Activated CD4-positive, alpha-beta T cell treated with anti-CD3 and anti-CD28 coated beads, Interleukin-2, amount 10 ng/mL, durations not matched to agents 24 days and 14 days (primary cell): ENCODE measurements at regions of chr7 and their contacts with region 1.

Region 1: DNA sequence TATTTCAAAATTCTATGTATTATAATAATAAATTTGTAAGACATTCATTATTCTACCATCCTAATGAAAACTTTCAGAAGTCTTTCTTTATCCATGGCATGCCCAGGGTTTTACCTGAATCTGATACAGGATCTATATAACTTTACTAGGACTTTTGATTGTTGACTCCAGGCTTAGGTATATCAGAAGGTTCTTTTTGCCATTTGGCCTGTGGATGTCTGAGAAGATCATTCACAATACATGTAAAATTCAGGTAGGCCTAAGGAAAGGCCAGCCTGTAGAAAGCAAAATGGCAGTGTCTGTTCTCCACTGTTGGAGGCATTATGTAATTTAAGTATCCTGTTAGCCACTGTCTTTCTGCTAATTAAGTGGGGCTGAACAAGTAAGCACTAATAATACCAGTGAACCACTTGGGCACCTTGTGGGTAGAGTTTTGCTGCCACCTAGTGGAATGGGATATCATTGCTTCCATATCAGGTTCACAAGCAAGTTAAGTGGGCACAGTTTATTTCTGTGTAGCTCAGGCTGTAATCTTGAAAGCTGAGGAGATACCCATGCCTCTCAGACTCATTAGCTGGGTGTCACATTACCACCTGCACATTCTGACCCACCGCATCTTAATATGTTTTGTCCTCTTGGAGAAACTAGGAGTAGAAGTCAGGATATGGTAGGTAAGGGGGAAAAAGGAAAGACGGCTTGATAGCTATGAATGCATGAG is 105.5 kb downstream of the SEPTIN7 start:
- DNase-seq: peak; percentile 91
- H3K4me3 Mint-ChIP-seq: no peak overlapping the region
- H3K27ac Mint-ChIP-seq: no peak overlapping the region
- H3K4me1 Mint-ChIP-seq: no peaks in the 10 kb centered on the region
- H3K27me3 Mint-ChIP-seq: no peaks in the 10 kb centered on the region

Region 2: DNA sequence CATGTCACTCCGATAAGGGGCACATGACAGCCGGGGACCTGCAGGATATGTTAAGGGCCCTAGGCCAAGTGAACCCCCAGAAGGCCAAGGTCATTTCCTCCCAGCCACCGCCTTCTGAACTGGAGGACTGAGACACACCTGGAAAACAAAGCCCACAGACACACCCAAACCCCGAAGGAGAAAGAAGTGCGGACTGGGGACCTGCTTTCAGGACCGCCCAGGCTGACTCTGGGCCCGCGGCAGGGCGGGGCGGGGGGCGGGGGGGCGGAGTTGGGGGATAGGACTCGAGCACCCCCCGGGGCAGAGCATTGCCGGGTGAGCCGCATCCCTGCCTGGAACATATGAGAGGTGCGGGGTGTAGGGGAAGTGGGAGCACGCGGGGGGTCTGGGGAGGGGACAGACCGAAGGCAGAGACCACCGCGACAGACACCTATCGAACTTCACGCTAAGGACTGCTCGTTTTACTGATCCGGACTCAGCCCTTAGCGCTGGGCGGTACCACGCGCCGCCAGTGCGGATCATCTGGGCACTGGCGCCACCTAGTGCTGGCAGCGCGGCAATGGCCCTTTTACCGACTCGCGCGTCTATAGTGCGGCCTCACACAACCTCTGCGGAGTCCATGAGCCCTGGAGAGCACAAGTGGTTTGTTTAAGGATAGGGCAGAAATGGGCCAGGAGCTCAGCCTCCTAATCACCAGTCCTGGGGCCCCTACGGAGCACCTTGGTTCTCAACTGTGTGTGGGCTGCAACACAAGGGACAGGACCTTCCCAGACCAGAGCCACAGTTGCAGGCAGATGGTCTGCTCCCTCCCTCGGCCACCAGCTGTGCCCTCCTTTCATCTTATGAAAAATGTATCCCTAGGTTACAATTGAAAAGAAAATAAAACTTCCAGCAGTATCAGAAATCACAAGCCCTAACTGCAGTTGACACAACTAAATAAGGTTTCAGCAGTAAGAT is 369.0 kb before region 1 on chr7:
- intact Hi-C with region 1: loop called (anchors 1 kb)
- DNase-seq: peak; percentile 94
- H3K4me3 Mint-ChIP-seq: peak overlapping the region; percentile 77
- H3K27ac Mint-ChIP-seq: no peak overlapping the region
- H3K4me1 Mint-ChIP-seq: peaks cover 2% of the 10 kb centered on the region
- H3K27me3 Mint-ChIP-seq: peaks cover 24% of the 10 kb centered on the region

Region 3: DNA sequence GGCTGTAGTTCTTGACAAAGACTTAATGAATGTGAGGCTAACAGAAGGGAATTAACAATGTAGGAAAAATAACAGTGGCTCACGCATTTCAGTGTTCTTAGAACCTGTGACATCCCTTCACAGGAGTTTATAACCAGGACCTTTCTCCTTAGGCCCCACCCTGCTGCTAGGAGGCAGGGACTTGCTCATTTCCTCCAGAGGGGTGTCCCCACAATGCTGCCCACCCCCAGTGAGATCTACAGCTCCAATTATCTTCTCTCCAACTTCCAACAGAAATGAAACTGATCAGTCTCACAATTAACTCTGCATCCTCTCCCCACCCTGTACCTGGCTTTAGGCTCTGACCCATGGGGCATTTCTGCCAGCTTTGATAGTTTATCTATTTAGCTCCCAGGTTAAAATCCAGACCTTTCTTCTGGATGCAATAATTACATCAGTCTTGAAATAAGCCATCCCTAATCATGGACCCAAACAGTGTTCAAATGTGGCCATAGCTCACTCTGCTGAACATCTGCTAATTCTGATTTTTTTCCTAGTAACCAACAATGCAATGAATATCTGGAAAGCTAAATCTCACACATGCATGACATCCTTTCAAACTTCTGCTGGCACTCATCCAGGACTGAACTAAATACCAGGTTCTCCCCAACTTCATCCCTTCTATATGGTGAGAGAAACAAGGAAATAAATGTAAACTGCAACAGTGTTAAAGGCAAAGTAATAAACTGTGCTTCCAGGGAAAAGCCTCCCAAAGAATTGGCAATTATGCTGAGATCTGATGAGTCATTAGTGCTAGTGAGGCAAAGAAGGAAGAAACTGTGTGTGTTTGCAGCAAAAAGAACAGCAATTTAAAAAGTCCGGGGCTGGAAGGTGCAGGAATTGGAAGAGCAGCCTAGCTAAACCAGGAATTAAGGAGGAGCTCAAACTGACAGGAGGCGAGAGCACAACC is 276.1 kb before region 1 on chr7:
- intact Hi-C with region 1: loop called (anchors 5 kb)
- DNase-seq: peak; percentile 51
- H3K4me3 Mint-ChIP-seq: no peak overlapping the region
- H3K27ac Mint-ChIP-seq: no peak overlapping the region
- H3K4me1 Mint-ChIP-seq: no peaks in the 10 kb centered on the region
- H3K27me3 Mint-ChIP-seq: no peaks in the 10 kb centered on the region

Region 4: GRCh38 chr7:35894721-35895120 is 11.6 kb before region 1 on chr7:
- intact Hi-C with region 1: no loop called
- DNase-seq: no peak
- H3K4me3 Mint-ChIP-seq: no peak overlapping the region
- H3K27ac Mint-ChIP-seq: no peak overlapping the region
- H3K4me1 Mint-ChIP-seq: peaks cover 13% of the 10 kb centered on the region
- H3K27me3 Mint-ChIP-seq: no peaks in the 10 kb centered on the region

Region 5: GRCh38 chr7:36784991-36785940 is 878.9 kb after region 1 on chr7:
- intact Hi-C with region 1: no loop called
- DNase-seq: peak; percentile 88
- H3K4me3 Mint-ChIP-seq: peak overlapping the region; percentile 68
- H3K27ac Mint-ChIP-seq: peak overlapping the region; percentile 88
- H3K4me1 Mint-ChIP-seq: peaks cover 72% of the 10 kb centered on the region
- H3K27me3 Mint-ChIP-seq: no peaks in the 10 kb centered on the region